Colonic mucosa (tissue), 4 donors: ENCODE measurements at regions of chr12 and their contacts with region 1.

Region 1: GRCh38 chr12:58967561-58967960 is 47.3 kb upstream of the LRIG3 start:
- DNase-seq: no peak
- H3K4me3 ChIP-seq: no peak overlapping the region
- H3K27ac ChIP-seq: no peak overlapping the region
- H3K4me1 ChIP-seq: no peaks in the 10 kb centered on the region
- H3K27me3 ChIP-seq: no peaks in the 10 kb centered on the region
- CTCF ChIP-seq: no peak

Region 2: GRCh38 chr12:59023861-59024424 is 56.4 kb after region 1 on chr12:
- intact Hi-C with region 1: loop called (anchors 10 kb)
- DNase-seq: no peak
- H3K4me3 ChIP-seq: no peak overlapping the region
- H3K27ac ChIP-seq: no peak overlapping the region
- H3K4me1 ChIP-seq: no peaks in the 10 kb centered on the region
- H3K27me3 ChIP-seq: no peaks in the 10 kb centered on the region
- CTCF ChIP-seq: no peak

Region 3: DNA sequence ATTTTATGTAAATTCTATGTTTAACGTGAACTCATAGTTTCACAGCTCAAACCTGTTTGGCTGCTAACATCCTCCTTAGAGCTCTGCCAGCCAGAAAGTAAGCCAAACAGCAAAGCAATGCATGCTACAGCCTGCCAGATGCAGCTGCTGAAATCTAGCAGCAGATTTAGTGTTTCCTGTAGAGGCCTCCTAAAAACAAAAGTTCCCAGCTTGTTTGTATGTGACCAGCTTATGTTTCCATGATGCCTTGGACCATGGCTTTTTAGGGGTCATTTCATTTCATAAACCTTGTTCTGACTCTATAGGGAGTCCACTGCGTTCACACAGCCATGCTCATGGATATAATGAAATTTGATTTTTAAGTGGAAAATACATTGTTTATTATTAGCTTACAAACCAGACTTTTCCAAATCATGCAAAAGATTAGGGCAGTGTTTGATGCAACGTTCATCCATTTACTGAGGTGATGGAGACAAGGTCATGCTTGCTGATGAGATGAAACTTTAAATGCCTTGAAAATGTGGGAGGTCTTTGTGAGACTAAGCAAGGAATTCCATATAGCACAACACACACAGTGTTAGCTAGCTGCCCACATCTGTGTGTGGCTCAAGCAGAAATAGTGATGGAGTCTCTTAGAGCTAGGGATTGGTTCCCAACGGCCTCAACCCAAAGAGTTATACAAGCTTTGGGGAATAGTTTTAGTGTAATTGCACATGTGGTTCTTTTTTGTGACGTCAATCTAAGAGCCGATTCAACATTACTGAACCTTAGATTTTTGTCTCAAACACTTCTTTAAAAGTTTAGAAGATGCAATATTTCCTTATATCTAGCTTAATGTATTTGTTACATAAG is 110.2 kb after region 1 on chr12:
- intact Hi-C with region 1: loop called (anchors 10 kb)
- DNase-seq: peak; percentile 54
- H3K4me3 ChIP-seq: no peak overlapping the region
- H3K27ac ChIP-seq: peak overlapping the region; percentile 67
- H3K4me1 ChIP-seq: no peaks in the 10 kb centered on the region
- H3K27me3 ChIP-seq: no peaks in the 10 kb centered on the region
- CTCF ChIP-seq: no peak